CD14-positive monocyte (primary cell): ENCODE measurements at regions of chr5 and their contacts with region 1.

Region 1: GRCh38 chr5:96124589-96124988 is 162.9 kb upstream of the ELL2 start:
- DNase-seq: no peak
- H3K4me3 ChIP-seq: no peak overlapping the region
- H3K4me3 Mint-ChIP-seq: no peak overlapping the region
- H3K27ac ChIP-seq: no peak overlapping the region
- H3K27ac Mint-ChIP-seq: no peak overlapping the region
- H3K4me1 ChIP-seq: no peaks in the 10 kb centered on the region
- H3K4me1 Mint-ChIP-seq: no peaks in the 10 kb centered on the region
- H3K27me3 ChIP-seq: no peaks in the 10 kb centered on the region
- H3K27me3 Mint-ChIP-seq: no peaks in the 10 kb centered on the region
- CTCF ChIP-seq: no peak

Region 2: DNA sequence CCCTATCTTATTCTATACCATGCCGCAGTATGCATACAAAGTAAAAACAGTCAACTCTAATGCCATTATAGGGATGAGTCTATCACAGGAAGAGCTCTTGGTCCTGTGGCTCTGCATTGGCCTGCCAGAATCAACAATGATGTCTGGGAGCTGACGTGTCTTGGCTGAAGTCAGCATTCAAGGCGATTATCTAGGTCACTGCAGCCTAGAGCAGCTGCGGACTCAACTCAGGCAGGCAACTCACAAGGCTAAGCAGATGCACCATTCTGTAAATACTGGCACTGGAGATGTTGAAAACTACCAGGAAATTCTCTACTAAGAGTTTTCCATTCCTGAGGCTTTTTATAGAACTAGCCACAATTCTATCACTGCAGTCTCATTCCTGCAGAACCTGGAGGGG is 455.0 kb before region 1 on chr5:
- intact Hi-C with region 1: loop called in 1 of 2 experiments (anchors 5 kb)
- DNase-seq: no peak
- H3K4me3 ChIP-seq: no peak overlapping the region
- H3K4me3 Mint-ChIP-seq: no peak overlapping the region
- H3K27ac ChIP-seq: no peak overlapping the region
- H3K27ac Mint-ChIP-seq: peak overlapping the region in 1 of 7 donors; percentile 68
- H3K4me1 ChIP-seq: peaks cover 7 to 10% of the 10 kb centered on the region in 2 donors
- H3K4me1 Mint-ChIP-seq: peaks cover 11% of the 10 kb centered on the region
- H3K27me3 ChIP-seq: no peaks in the 10 kb centered on the region
- H3K27me3 Mint-ChIP-seq: no peaks in the 10 kb centered on the region
- CTCF ChIP-seq: no peak

Region 3: GRCh38 chr5:96198356-96199058 is 73.9 kb after region 1 on chr5:
- intact Hi-C with region 1: no loop called
- DNase-seq: no peak
- H3K4me3 ChIP-seq: no peak overlapping the region
- H3K4me3 Mint-ChIP-seq: no peak overlapping the region
- H3K27ac ChIP-seq: no peak overlapping the region
- H3K27ac Mint-ChIP-seq: peak overlapping the region in 1 of 7 donors; percentile 52
- H3K4me1 ChIP-seq: peaks cover 24 to 29% of the 10 kb centered on the region in 2 donors
- H3K4me1 Mint-ChIP-seq: peaks cover 36% of the 10 kb centered on the region
- H3K27me3 ChIP-seq: no peaks in the 10 kb centered on the region
- H3K27me3 Mint-ChIP-seq: peaks cover 0 to 4% (median 0%) of the 10 kb centered on the region in 3 donors
- CTCF ChIP-seq: no peak